A673 (cell line): ENCODE measurements at regions of chr16 and their contacts with region 1.

Region 1: GRCh38 chr16:15880434-15881308 is 7.7 kb downstream of the CEP20 start:
- DNase-seq: no peak
- H3K4me3 ChIP-seq: no peak overlapping the region
- H3K27ac ChIP-seq: no peak overlapping the region
- H3K4me1 ChIP-seq: no peaks in the 10 kb centered on the region
- H3K27me3 ChIP-seq: no peaks in the 10 kb centered on the region
- CTCF ChIP-seq: no peak

Region 2: DNA sequence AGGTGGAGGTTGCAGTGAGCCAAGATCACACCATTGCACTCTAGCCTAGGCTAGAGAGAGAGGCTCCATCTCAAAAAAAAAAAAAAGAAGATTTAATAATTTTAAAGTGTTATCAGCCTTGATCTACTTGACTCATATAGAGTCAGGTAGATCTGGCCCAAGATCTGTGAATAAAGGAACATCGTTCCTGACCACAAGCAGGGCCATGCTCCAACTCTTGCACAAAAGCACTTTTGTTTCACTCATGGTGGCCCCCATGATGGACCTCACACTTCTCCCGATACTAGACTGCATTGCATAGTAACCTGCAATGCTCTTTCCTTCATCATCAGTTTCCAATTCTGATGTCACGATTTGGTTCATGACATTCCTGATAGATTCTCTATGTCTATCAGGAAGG is 18.7 kb before region 1 on chr16:
- CTCF ChIA-PET with region 1: no interaction called
- POLR2A ChIA-PET with region 1: no interaction called
- intact Hi-C with region 1: loop called (anchors 2 kb)
- DNase-seq: no peak
- H3K4me3 ChIP-seq: no peak overlapping the region
- H3K27ac ChIP-seq: no peak overlapping the region
- H3K4me1 ChIP-seq: no peaks in the 10 kb centered on the region
- H3K27me3 ChIP-seq: peaks cover 22% of the 10 kb centered on the region
- CTCF ChIP-seq: no peak